GM12878 (cell line): ENCODE measurements at regions of chr16 and their contacts with region 1.

Region 1: DNA sequence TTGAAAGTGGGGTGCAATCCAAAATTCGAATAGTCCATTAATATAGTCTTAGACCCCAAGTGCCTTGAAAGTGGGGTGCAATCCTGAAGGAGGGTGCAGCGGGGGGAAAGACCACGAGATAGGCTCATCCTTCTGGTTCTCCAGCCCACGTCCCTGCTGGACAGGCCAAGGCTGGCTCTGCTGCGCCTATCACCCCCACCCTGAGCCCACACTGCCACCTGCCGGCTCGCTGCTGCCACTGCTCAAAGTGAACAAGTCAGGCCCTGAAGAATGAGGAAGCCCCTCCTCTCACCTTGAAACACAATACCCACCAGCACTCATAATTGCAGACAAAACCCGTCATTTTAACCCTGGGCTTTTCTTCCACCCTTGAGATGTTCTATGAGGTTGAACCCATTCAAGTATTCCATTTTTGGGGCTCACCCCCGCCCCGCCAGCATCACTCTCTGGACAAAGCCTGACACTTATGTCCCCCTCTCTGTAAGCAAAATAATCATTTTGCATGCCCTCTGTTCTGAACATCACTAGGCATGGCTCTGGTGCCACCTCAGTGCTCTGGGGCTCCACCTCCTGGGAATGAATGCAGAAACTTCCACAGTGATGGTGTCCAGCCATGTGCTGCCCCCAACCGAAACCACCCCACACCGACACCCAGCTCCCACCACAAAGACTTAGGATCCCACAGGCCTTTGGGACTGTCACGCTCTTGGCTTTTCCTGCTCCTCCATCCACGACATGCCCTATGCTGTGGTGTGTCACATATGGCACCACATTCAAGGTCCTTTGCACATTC is 56.8 kb downstream of the BEAN1 start:
- DNase-seq: no peak
- ATAC-seq: peak; percentile 88
- H3K4me3 ChIP-seq: no peak overlapping the region
- H3K27ac ChIP-seq: no peak overlapping the region
- H3K4me1 ChIP-seq: peaks cover 5% of the 10 kb centered on the region
- H3K27me3 ChIP-seq: no peaks in the 10 kb centered on the region
- CTCF ChIP-seq: peak; percentile 96 to 99 (median 98)
- EP300 ChIP-seq: no peak
- POLR2A ChIP-seq: no peak
- RAD21 ChIP-seq: peak; percentile 90

Region 2: DNA sequence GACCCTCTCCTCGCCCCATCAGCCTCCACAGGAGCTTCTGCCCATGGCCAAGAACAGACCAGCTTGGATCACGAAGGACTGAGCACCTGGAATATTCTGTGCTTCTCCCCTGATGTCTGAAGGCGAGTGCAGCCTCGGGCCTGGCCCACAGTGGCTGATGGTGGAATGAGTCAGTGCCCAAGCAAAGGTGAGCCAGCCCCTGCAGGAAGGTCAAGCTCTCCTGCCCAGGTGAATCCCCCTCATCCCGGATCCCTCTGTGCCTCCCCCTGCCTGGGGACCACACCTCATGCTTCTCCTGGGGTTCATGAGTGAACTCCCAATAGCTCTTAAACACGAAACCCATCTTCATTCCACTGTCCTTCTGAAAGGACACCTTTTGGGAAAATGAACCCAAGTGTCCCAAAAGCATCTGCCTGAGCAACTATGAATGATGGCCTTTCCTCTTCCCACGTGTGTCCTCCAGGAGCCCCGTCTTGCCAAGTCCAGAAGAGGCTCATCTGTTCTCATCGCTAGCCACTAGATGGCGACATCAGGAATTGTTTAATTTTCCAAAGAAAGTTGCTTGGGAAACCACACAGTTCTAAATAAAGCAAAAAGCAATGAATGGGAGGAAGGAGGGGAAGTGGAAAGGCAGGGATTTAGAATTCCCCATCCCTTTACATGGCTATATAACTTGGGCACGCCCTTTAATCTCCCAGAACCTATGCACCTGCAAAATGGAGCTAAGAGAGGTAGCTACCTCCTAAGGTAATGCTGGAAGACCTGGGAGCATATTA is 126.5 kb before region 1 on chr16:
- CTCF ChIA-PET with region 1: interaction called, 6 read pairs
- POLR2A ChIA-PET with region 1: no interaction called
- RAD21 ChIA-PET with region 1: interaction called, 3 read pairs
- SMC1A ChIA-PET with region 1: no interaction called
- in situ Hi-C with region 1: no loop called
- intact Hi-C with region 1: loop called (anchors 5 kb)
- DNase-seq: no peak
- ATAC-seq: peak; percentile 68
- H3K4me3 ChIP-seq: no peak overlapping the region
- H3K27ac ChIP-seq: no peak overlapping the region
- H3K4me1 ChIP-seq: no peaks in the 10 kb centered on the region
- H3K27me3 ChIP-seq: no peaks in the 10 kb centered on the region; a peak in 2 of 4 replicates
- CTCF ChIP-seq: peak; percentile 50 to 69 (median 56)
- EP300 ChIP-seq: no peak
- POLR2A ChIP-seq: no peak
- RAD21 ChIP-seq: peak; percentile 28; the same call in 1 of the 2 replicates

Region 3: DNA sequence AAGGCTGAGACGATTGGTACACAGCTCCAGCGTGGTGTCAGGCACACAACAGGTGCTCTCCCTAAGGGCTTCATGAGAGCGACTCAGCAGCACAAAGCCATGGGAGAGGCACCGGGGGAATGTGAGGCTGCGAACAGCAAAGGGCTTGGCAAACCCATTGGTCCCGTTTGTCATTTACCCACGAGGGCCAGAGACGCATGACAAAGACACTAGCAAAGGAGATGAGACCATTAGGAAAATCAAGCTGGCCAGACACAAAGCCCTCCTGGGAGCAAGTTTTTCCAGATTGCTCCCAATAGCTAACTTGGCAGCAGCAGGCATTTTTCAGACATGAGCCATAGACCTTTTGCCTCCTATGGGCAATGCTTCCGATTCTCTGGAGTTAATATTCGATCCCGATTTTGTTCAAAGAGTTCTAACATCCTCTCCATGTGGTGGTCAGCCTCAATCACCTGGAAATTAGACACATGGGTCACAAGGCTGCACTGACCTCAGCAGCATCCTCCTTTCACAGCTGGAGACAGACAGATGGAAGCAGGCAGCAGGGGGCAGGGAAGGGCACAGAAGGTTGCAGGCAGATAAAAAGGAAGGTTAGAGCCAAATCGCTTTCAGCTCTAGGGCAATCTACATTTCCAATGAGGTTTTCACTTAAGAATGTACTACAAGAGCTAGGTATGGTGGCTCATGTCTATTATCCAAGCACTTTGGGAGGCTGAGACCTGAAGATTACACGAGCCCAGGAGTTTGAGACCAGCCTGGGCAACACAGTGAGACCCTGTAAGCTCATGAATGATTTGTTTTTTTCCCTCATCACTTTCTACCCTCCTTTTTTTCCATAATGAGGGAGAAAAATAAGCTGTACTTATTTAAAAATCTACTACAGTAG is 28.0 kb after region 1 on chr16:
- CTCF ChIA-PET with region 1: interaction called, 12 read pairs
- POLR2A ChIA-PET with region 1: no interaction called
- RAD21 ChIA-PET with region 1: interaction called, 4 read pairs
- SMC1A ChIA-PET with region 1: interaction called, 4 read pairs
- in situ Hi-C with region 1: no loop called
- intact Hi-C with region 1: loop called (anchors 2 kb)
- DNase-seq: no peak
- ATAC-seq: no peak
- H3K4me3 ChIP-seq: no peak overlapping the region
- H3K27ac ChIP-seq: no peak overlapping the region
- H3K4me1 ChIP-seq: peaks cover 15% of the 10 kb centered on the region
- H3K27me3 ChIP-seq: no peaks in the 10 kb centered on the region
- CTCF ChIP-seq: 0 out of 6 replicates have a peak, but pooled peaks of 1 of the 3 experiments have one; percentile 2
- EP300 ChIP-seq: no peak
- POLR2A ChIP-seq: no peak
- RAD21 ChIP-seq: no peak

Region 4: DNA sequence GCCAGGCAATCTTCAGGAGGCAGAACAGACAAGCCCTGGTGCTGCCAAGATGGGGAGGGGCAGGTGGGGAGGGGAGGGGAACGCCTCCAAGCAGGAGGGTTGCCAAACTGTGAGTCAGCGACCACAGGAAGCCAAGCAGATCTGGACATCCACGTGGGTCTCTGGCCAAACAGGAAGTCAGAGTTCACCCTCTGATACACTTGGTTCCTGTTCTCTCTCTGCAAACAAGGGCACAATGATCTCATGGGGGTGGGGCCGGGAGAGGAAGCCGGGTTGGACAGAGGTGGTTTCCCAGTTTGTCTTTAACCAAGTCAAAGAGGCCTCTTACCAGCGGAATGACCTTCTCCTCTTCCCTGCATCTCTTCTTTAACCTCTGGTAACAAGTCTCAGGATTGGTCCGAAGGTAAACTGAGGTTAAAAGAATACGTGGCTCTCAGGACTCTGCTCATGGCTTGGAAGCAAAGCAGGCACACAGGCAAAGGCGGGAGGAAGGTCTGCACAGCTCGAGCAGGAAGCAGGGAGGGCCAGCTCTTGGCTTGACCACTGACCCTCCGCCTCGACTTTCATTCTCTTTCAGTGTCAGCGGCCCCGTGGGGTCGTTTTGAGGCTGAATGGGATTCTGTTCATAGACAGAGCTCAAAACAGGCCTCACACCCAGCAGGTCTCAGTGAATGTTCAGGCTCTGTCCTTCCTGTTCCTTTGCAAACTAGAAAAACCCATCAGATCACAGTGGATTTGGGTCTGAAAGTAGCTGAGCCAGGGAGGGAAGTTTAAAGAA is 33.1 kb after region 1 on chr16:
- CTCF ChIA-PET with region 1: interaction called, 4 read pairs
- POLR2A ChIA-PET with region 1: no interaction called
- RAD21 ChIA-PET with region 1: interaction called, 3 read pairs
- SMC1A ChIA-PET with region 1: interaction called, 4 read pairs
- in situ Hi-C with region 1: no loop called
- intact Hi-C with region 1: loop called (anchors 2 kb)
- DNase-seq: peak; percentile 98
- ATAC-seq: peak; percentile 95
- H3K4me3 ChIP-seq: peak overlapping the region; percentile 11; the same call in 1 of the 2 replicates
- H3K27ac ChIP-seq: peak overlapping the region; percentile 84
- H3K4me1 ChIP-seq: peaks cover 50% of the 10 kb centered on the region
- H3K27me3 ChIP-seq: no peaks in the 10 kb centered on the region
- CTCF ChIP-seq: no peak
- EP300 ChIP-seq: peak; percentile 70 to 75
- POLR2A ChIP-seq: no peak; the same call in 1 of the 2 replicates
- RAD21 ChIP-seq: 0 out of 2 replicates have a peak, but pooled peaks have one; percentile 0